Left cardiac atrium (tissue), 4 donors: ENCODE measurements at regions of chr22 and their contacts with region 1.

Region 1: DNA sequence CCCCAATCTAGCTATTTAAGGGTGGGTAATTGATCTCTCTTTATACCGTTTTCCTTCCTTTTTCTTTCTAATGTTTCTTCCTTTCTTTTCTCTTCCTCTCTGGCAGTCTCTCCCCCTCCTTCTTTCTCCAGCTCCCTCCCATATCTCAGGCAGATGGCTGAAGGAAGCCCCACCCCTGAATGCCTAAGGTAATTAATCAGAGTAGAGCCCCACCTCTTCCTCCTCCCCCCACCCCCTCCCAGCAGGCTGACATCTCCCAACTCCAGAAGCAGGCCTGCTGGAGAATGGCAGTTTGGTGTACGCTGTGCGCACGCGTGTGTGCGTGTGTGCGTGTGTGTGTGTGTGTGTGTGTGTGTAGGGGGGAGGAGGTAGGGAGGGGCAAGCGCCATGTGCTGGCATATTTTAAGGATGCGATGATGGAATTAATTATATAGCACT is 122.6 kb downstream of the APOL5 start:
- DNase-seq: peak; percentile 89
- ATAC-seq: peak; percentile 87 to 94

Region 2: DNA sequence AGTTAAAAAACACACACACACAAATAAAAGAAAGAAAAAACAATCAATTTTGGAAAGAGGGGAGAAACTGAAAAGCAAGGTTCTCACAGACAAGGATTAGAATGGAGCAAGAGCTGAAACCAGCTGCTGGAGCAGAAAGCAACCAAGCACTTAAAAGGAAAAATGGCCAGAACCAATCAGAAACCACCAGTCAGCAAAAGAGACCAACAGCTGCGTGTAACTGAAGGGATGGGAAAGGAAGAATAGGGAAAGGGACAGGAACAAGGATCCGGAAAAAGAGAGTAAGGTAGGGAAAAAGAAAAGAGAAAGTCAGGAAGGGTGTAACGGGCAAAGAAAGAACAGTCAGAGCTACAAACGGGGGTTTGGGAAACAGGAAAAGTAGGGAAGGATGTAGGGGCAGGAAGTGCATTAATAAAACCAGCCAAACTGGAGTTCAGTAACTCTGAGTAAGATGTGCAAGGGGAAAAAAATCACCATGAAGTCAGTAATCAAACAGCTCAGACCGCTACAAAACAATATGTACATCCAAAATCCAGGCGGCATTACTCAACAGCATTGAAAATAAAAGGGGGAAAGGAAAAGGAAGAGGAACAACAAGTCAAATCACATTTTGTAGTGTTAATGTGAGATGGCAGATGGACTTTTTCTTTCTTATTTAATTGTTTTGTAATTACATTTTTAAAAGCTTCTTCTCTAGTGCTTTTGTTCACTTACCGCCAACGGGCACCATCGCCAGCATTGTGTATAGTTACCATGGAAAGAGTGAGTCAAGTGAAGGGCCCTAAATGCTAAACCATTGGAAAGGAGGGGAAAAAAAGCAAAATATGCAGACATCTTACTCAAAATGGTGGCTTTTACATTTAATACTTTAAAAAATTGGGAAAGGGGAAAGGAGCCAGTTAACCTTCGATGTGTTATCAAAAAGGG is 73.4 kb before region 1 on chr22:
- intact Hi-C with region 1: loop called in 1 of 2 experiments (anchors 5 kb)
- DNase-seq: no peak
- ATAC-seq: peak; percentile 58 to 61

Region 3: GRCh38 chr22:35894937-35895708 is 54.8 kb after region 1 on chr22:
- intact Hi-C with region 1: no loop called
- DNase-seq: no peak
- ATAC-seq: peak; percentile 95 to 96

Region 4: GRCh38 chr22:35914665-35915476 is 74.5 kb after region 1 on chr22:
- intact Hi-C with region 1: loop called in 1 of 2 experiments (anchors 5 kb)
- DNase-seq: peak; percentile 48
- ATAC-seq: peak; percentile 91 to 96

Region 5: DNA sequence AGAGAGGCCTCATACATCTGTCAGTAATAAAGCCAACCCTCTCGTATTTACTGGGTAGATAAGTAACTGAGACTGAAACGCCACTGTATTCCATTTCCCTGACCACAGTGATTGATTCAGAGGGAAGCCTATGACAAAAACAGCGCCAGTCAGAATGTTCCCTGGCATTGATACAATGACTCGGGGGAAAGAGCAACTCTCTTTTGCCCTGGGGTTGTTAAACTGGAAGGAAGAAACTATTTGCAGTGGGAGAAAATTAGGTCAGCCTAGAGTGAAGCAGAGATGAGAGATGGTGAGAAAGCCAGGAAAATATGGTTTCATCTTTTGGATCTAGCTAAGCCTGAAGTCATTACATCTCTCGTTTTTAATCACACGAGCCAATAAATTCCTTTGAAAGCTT is 236.9 kb after region 1 on chr22:
- intact Hi-C with region 1: no loop called
- DNase-seq: no peak
- ATAC-seq: peak; percentile 12 to 65